Gastrocnemius medialis (tissue), 4 donors: ENCODE measurements at regions of chr9 and their contacts with region 1.

Region 1: DNA sequence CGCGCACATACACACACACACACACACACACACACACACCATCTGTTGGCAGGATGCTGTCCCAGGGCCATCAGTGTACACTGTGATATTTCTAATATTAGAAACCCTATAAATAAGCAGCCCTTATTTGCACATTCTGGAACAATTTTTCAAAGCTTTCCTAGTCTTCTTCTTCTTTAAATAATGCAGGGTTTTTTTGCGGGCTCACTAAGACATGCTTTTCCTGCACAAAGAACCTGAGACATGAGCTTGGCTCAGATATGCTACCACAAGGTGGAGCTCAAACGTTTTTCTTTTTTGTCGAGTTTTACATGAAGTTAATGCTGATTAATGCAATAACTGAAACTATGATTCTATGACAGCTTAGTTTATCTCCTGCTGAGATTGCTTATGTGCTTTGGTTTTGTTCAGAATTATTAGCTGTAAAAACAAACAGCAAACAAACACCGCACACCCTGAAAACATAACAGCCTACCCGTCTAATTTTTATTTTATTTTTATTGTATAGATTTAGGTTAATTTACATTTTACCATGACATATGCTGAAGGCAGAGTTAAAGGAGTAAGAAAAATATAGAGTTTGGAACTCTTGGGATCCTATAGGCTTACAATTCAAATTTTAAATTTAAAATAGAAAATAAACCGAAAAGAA is 95.8 kb downstream of the ALDH1A1 start:
- DNase-seq: no peak
- ATAC-seq: peak; percentile 64 to 77
- H3K4me3 ChIP-seq: no peak overlapping the region
- H3K27ac ChIP-seq: peak overlapping the region in 2 of 4 donors; percentile 16 to 17
- H3K4me1 ChIP-seq: peaks cover 15 to 18% of the 10 kb centered on the region in 2 donors
- H3K27me3 ChIP-seq: no peaks in the 10 kb centered on the region
- CTCF ChIP-seq: peak; percentile 19 to 66 (median 47)
- POLR2A ChIP-seq: no peak

Region 2: GRCh38 chr9:72749276-72749675 is 107.8 kb before region 1 on chr9:
- in situ Hi-C with region 1: no loop called
- intact Hi-C with region 1: no loop called
- DNase-seq: no peak
- ATAC-seq: no peak
- H3K4me3 ChIP-seq: no peak overlapping the region
- H3K27ac ChIP-seq: no peak overlapping the region
- H3K4me1 ChIP-seq: no peaks in the 10 kb centered on the region
- H3K27me3 ChIP-seq: no peaks in the 10 kb centered on the region
- CTCF ChIP-seq: no peak
- POLR2A ChIP-seq: no peak

Region 3: DNA sequence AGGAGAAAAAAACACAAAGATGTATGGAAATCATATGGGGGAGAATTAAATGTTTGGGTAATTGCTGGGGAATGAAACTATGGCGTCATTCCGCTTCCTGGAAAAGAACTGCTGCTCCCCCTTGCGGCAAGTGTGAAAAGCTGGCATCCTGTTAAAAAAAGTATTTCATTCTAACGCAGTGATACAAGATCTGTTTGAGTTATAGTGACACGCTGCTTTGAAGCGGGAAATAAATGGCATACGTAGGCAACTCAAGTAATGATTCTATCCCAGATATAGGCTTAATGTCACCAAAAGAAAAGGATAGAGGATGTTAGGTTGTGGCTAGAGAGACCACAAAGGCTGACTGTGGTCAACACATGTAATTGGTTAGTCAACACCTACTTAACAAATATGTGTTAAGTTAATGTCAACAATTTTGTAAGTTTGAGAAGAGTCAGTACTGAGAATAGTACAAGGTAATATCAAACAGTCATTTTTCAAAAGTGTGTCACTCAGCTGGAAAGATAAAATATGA is 166.0 kb after region 1 on chr9:
- in situ Hi-C with region 1: loop called in 3 of 4 experiments (anchors 5 to 10 kb)
- intact Hi-C with region 1: loop called (anchors 5 kb)
- DNase-seq: peak; percentile 16 to 35
- ATAC-seq: peak; percentile 74 to 77
- H3K4me3 ChIP-seq: no peak overlapping the region
- H3K27ac ChIP-seq: no peak overlapping the region
- H3K4me1 ChIP-seq: peaks cover 10 to 13% of the 10 kb centered on the region in 2 donors
- H3K27me3 ChIP-seq: no peaks in the 10 kb centered on the region
- CTCF ChIP-seq: peak; percentile 72 to 86 (median 79)
- POLR2A ChIP-seq: no peak

Region 4: DNA sequence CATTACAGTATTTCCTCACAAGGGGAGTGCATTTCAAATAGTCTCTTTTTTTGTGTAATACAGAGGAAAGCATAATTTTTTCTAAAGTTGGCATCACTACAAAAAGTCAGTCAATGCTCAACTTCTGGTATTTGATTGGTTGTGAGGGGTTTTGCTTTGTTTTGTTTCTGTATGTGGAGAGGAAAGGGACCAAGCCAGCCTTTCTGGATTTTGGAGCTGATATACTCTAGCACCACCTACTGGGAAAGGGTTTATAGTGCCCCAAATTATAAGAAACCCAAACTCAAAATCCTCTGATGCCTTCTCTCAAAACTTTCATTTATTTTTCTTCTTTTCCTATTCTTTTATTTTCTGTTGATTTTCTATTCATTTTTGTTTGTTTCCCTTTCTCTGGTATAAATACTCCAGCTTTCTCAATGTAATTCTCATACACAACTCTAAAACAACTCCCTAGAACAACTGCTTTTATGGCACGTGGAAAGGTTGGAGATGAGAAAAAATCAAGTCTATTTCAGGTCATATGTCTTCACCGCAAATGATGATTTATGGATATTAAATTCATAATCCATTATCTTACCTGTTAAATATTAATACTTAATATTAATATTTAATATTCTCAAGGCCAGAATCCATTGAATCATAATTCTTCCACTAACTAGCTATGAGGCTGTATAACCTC is 225.0 kb after region 1 on chr9:
- in situ Hi-C with region 1: loop called in 3 of 4 experiments (anchors 5 to 25 kb)
- intact Hi-C with region 1: loop called (anchors 5 kb)
- DNase-seq: no peak
- ATAC-seq: peak; percentile 56 to 70
- H3K4me3 ChIP-seq: no peak overlapping the region
- H3K27ac ChIP-seq: no peak overlapping the region
- H3K4me1 ChIP-seq: no peaks in the 10 kb centered on the region
- H3K27me3 ChIP-seq: no peaks in the 10 kb centered on the region
- CTCF ChIP-seq: peak; percentile 30 to 78 (median 49)
- POLR2A ChIP-seq: no peak

Region 5: GRCh38 chr9:73093740-73094379 is 236.8 kb after region 1 on chr9:
- in situ Hi-C with region 1: loop called in 3 of 4 experiments (anchors 5 to 25 kb)
- intact Hi-C with region 1: no loop called
- DNase-seq: no peak
- ATAC-seq: peak in 1 of 2 donors; percentile 56
- H3K4me3 ChIP-seq: peak overlapping the region; percentile 24 to 33 (median 30)
- H3K27ac ChIP-seq: no peak overlapping the region
- H3K4me1 ChIP-seq: no peaks in the 10 kb centered on the region
- H3K27me3 ChIP-seq: no peaks in the 10 kb centered on the region
- CTCF ChIP-seq: no peak
- POLR2A ChIP-seq: no peak

Region 6: GRCh38 chr9:73183917-73184861 is 327.1 kb after region 1 on chr9:
- in situ Hi-C with region 1: loop called (anchors 10 to 25 kb)
- intact Hi-C with region 1: loop called (anchors 5 kb)
- DNase-seq: no peak
- ATAC-seq: peak in 1 of 2 donors; percentile 33
- H3K4me3 ChIP-seq: no peak overlapping the region
- H3K27ac ChIP-seq: no peak overlapping the region
- H3K4me1 ChIP-seq: no peaks in the 10 kb centered on the region
- H3K27me3 ChIP-seq: no peaks in the 10 kb centered on the region
- CTCF ChIP-seq: peak; percentile 41 to 67 (median 54)
- POLR2A ChIP-seq: no peak